PC-3 (cell line): ENCODE measurements at regions of chr5 and their contacts with region 1.

Region 1: GRCh38 chr5:98679963-98680362 is 93.5 kb upstream of the RGMB start:
- DNase-seq: no peak
- ATAC-seq: no peak
- H3K4me3 ChIP-seq: no peak overlapping the region
- H3K27ac ChIP-seq: no peak overlapping the region
- H3K4me1 ChIP-seq: no peaks in the 10 kb centered on the region
- H3K27me3 ChIP-seq: no peaks in the 10 kb centered on the region
- CTCF ChIP-seq: no peak

Region 2: GRCh38 chr5:97929383-97929782 is 750.6 kb before region 1 on chr5:
- CTCF ChIA-PET with region 1: no interaction called
- POLR2A ChIA-PET with region 1: interaction called, 38 read pairs
- intact Hi-C with region 1: no loop called
- DNase-seq: no peak
- ATAC-seq: no peak
- H3K4me3 ChIP-seq: no peak overlapping the region
- H3K27ac ChIP-seq: no peak overlapping the region
- H3K4me1 ChIP-seq: no peaks in the 10 kb centered on the region
- H3K27me3 ChIP-seq: no peaks in the 10 kb centered on the region
- CTCF ChIP-seq: no peak

Region 3: DNA sequence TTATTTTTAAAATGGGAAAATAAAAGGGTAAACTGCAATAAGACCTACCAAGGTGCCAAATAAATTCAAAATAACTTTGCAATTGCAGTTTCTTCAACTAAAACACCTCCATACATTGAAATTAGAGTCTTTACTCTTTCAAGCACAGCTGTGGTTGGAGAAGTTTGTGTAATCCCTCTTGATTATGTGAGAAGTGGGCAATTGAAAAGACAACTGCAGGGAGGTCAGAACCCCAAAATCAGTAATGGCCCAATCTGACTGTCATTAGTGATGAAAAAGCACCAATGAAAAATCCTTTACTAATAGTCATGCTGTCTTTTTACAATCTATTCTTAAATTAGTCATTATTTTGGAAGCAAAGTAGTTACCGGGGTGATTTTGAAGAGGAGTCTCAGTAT is 23.2 kb before region 1 on chr5:
- CTCF ChIA-PET with region 1: no interaction called
- POLR2A ChIA-PET with region 1: no interaction called
- intact Hi-C with region 1: no loop called
- DNase-seq: no peak
- ATAC-seq: no peak
- H3K4me3 ChIP-seq: no peak overlapping the region
- H3K27ac ChIP-seq: no peak overlapping the region
- H3K4me1 ChIP-seq: no peaks in the 10 kb centered on the region
- H3K27me3 ChIP-seq: no peaks in the 10 kb centered on the region
- CTCF ChIP-seq: no peak